Sigmoid colon (tissue), 7 donors: ENCODE measurements at regions of chr1 and their contacts with region 1.

Region 1: GRCh38 chr1:201481761-201482493 is 12.9 kb upstream of the PHLDA3 start:
- DNase-seq: peak; percentile 96
- H3K4me3 ChIP-seq: peak overlapping the region in 3 of 4 donors; percentile 27 to 36 (median 34)
- H3K27ac ChIP-seq: peak overlapping the region; percentile 92 to 98 (median 96)
- H3K4me1 ChIP-seq: peaks cover 0 to 53% (median 48%) of the 10 kb centered on the region in 4 donors
- H3K27me3 ChIP-seq: no peaks in the 10 kb centered on the region
- CTCF ChIP-seq: peak; percentile 86 to 98 (median 96)
- EP300 ChIP-seq: no peak
- POLR2A ChIP-seq: no peak

Region 2: GRCh38 chr1:201361652-201362504 is 120.0 kb before region 1 on chr1:
- intact Hi-C with region 1: no loop called
- DNase-seq: no peak
- H3K4me3 ChIP-seq: no peak overlapping the region
- H3K27ac ChIP-seq: no peak overlapping the region
- H3K4me1 ChIP-seq: no peaks in the 10 kb centered on the region
- H3K27me3 ChIP-seq: no peaks in the 10 kb centered on the region
- CTCF ChIP-seq: peak in 3 of 4 experiments; percentile 48 to 67 (median 64)
- EP300 ChIP-seq: no peak
- POLR2A ChIP-seq: no peak

Region 3: GRCh38 chr1:201447911-201448871 is 33.7 kb before region 1 on chr1:
- intact Hi-C with region 1: loop called (anchors 2 kb)
- DNase-seq: peak; percentile 93
- H3K4me3 ChIP-seq: no peak overlapping the region
- H3K27ac ChIP-seq: peak overlapping the region; percentile 9 to 78 (median 68)
- H3K4me1 ChIP-seq: peaks cover 0 to 35% (median 34%) of the 10 kb centered on the region in 4 donors
- H3K27me3 ChIP-seq: no peaks in the 10 kb centered on the region
- CTCF ChIP-seq: peak; percentile 78 to 92 (median 84)
- EP300 ChIP-seq: peak in 1 of 4 donors; percentile 41
- POLR2A ChIP-seq: no peak

Region 4: DNA sequence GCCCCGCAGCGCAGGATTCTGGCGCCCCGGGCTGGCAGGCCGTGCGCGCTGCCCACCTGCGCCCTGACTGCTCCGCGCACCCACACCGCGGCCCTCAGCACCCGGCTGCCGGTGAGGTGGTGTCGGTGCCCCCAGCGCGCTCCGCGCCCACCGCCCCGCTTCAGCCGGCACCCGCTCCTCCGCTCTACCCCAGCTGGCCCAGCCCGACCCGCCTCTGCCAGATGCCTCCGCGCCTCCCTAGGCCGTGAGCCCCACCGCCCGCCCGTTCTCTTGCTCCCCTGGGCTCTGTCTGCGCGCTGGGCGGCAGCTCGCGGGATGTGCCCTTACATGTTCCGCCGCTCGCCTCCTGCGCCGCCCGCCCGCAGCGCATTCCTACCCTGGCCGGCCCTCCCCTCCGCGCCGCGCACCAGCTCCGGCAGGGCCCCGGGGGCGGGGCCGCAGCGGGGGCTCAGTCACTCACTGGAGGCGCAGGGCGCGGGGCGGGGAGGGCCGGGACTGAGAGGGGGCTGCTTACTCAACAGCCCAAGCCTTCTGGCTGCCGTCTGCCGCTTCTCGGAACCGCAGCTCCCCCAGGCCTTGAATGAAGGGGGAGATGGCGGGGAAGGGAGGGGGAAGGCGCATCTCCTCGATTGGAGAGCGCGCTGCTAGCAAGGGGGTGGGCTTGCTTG is 12.9 kb before region 1 on chr1 and contains the start of gene PHLDA3:
- intact Hi-C with region 1: loop called (anchors 1 kb)
- DNase-seq: peak; percentile 98
- H3K4me3 ChIP-seq: peak within 1 kb of the TSS; percentile 65 to 100 (median 94)
- H3K27ac ChIP-seq: peak within 1 kb of the TSS; percentile 94 to 100 (median 98)
- H3K4me1 ChIP-seq: peaks cover 0 to 52% (median 41%) of the 10 kb centered on the region in 4 donors
- H3K27me3 ChIP-seq: no peaks in the 10 kb centered on the region
- CTCF ChIP-seq: no peak
- EP300 ChIP-seq: peak in 1 of 4 donors; percentile 40
- POLR2A ChIP-seq: peak; percentile 82 to 92
- total RNA-seq, gene PHLDA3: 93.4 to 135 (median 108) TPM

Region 5: GRCh38 chr1:201828820-201829774 is 347.2 kb after region 1 on chr1 and contains the start of gene IPO9:
- intact Hi-C with region 1: no loop called
- DNase-seq: peak; percentile 96
- H3K4me3 ChIP-seq: peak within 1 kb of the TSS; percentile 83 to 99 (median 92)
- H3K27ac ChIP-seq: peak within 1 kb of the TSS; percentile 88 to 97 (median 92)
- H3K4me1 ChIP-seq: peaks cover 0 to 39% (median 35%) of the 10 kb centered on the region in 4 donors
- H3K27me3 ChIP-seq: no peaks in the 10 kb centered on the region
- CTCF ChIP-seq: peak; percentile 87 to 96 (median 92)
- EP300 ChIP-seq: no peak
- POLR2A ChIP-seq: no peak
- total RNA-seq, gene IPO9: 15.5 to 20.2 (median 17.9) TPM